PC-9 (cell line): ENCODE measurements at regions of chr11 and their contacts with region 1.

Region 1: GRCh38 chr11:44286268-44286880 is 23.6 kb downstream of the ALX4 start:
- DNase-seq: peak; percentile 39 to 44
- H3K4me3 ChIP-seq: no peak overlapping the region
- H3K27ac ChIP-seq: no peak overlapping the region
- H3K4me1 ChIP-seq: no peaks in the 10 kb centered on the region
- H3K27me3 ChIP-seq: peaks cover 26% of the 10 kb centered on the region
- CTCF ChIP-seq: peak; percentile 100

Region 2: GRCh38 chr11:44143943-44144909 is 142.1 kb before region 1 on chr11:
- CTCF ChIA-PET with region 1: no interaction called
- POLR2A ChIA-PET with region 1: no interaction called
- intact Hi-C with region 1: loop called (anchors 5 kb)
- DNase-seq: peak; percentile 52 to 99
- H3K4me3 ChIP-seq: peak overlapping the region; percentile 20; the same call in 1 of the 2 replicates
- H3K27ac ChIP-seq: peak overlapping the region; percentile 70
- H3K4me1 ChIP-seq: peaks cover 38% of the 10 kb centered on the region
- H3K27me3 ChIP-seq: no peaks in the 10 kb centered on the region
- CTCF ChIP-seq: no peak

Region 3: DNA sequence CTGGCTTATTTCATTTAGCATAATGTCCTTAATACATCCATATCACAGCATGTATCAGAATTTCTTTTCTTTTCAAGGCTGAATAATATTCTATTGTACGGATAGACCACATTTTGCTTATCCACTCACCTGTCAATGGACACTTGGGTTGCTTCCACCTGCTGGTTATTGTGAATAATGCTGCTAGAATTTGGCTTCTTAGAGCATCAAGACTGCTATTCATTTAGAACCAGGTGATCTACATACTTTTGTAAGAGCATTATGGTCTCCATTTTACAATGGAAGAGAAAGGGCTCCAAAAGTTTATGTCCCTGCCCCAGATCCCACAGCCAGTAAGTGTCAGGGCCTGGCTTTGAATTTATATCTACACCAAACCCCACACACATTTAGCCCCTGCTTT is 178.4 kb after region 1 on chr11:
- CTCF ChIA-PET with region 1: no interaction called
- POLR2A ChIA-PET with region 1: no interaction called
- intact Hi-C with region 1: loop called (anchors 10 kb)
- DNase-seq: no peak
- H3K4me3 ChIP-seq: no peak overlapping the region
- H3K27ac ChIP-seq: no peak overlapping the region
- H3K4me1 ChIP-seq: no peaks in the 10 kb centered on the region
- H3K27me3 ChIP-seq: peaks cover 34% of the 10 kb centered on the region
- CTCF ChIP-seq: peak; percentile 46

Region 4: GRCh38 chr11:44611687-44612434 is 325.5 kb after region 1 on chr11:
- CTCF ChIA-PET with region 1: interaction called, 3 read pairs
- POLR2A ChIA-PET with region 1: no interaction called
- intact Hi-C with region 1: loop called (anchors 10 kb)
- DNase-seq: no peak
- H3K4me3 ChIP-seq: no peak overlapping the region
- H3K27ac ChIP-seq: no peak overlapping the region
- H3K4me1 ChIP-seq: no peaks in the 10 kb centered on the region
- H3K27me3 ChIP-seq: no peaks in the 10 kb centered on the region
- CTCF ChIP-seq: no peak